Activated CD8-positive, alpha-beta T cell treated with anti-CD3 and anti-CD28 coated beads for 36 hours (primary cell): ENCODE measurements at regions of chr17 and their contacts with region 1.

Region 1: DNA sequence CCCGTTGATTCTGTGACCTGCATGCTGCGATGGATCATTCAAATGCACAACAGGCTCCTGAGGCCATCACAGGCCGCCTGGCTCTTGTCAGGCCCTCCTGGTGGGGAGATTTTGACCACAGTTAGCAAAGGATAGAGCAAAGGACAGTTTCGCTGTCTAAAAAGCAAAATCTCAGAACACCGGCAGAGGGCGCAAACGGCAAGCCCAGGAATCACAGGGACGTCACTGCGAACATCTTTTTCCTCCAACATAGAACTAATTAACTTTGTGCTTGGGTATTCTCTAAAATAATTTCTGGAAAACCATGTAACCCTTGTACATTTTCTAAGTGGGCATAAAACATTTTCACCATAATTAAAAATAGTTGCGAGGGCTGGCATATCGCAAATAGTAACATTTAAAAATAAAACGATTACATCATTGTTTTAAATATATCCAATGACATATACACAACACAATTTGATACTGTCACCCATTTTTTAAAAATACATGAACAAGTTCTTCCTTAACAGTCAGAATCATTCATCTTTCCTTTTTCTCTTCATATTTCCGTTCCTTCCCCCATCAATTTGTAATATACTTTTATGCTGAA is 19.7 kb upstream of the SLC47A1 start:
- DNase-seq: peak; percentile 77
- ATAC-seq: peak; percentile 71
- H3K4me3 Mint-ChIP-seq: no peak overlapping the region
- H3K27ac Mint-ChIP-seq: no peak overlapping the region
- H3K4me1 Mint-ChIP-seq: no peaks in the 10 kb centered on the region
- H3K27me3 Mint-ChIP-seq: peaks cover 3% of the 10 kb centered on the region
- CTCF ChIP-seq: peak; percentile 93

Region 2: DNA sequence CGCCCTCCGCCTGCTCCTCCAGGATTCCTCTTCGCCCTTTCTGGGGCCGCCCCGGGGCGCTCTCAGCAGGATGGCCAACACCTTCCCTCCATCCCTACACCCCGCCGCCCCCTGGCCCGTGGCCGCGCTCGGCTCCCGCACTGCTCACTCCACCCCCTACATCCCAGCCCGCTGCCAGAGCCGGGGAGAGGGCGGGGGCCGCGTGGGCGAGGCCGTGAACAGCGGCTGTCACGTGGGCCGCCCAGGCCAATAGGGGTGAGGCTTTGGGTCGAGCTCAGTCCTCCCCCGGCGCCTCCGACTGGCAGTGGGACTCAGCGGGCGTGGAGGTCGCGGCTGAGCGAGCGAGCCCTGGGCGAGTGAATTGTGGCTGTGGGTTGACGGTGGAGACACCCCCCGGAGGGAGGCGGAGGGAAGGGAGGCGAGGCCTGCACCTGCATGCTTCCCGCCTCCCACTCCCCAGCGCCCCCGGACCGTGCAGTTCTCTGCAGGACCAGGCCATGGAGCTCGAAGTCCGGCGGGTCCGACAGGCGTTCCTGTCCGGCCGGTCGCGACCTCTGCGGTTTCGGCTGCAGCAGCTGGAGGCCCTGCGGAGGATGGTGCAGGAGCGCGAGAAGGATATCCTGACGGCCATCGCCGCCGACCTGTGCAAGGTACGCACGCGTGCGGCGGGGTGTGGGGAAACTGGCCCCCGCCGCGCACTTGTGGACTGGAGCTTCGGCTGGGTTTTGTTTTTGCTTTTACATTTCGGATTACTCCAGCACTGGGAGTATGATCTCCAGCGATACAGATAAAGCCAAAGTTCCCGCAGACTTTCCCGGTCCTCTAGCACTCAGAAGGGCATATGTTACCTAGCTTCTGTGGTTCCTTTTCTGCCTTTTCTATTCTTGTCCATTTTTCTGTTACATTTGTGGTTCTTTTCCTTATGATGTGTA is 134.7 kb after region 1 on chr17 and contains the start of gene ALDH3A2:
- CTCF ChIA-PET with region 1: interaction called, 16 read pairs
- POLR2A ChIA-PET with region 1: no interaction called
- intact Hi-C with region 1: loop called (anchors 5 kb)
- DNase-seq: peak; percentile 98
- ATAC-seq: peak; percentile 94
- H3K4me3 Mint-ChIP-seq: peak within 1 kb of the TSS; percentile 88
- H3K27ac Mint-ChIP-seq: peak within 1 kb of the TSS; percentile 89
- H3K4me1 Mint-ChIP-seq: peaks cover 40% of the 10 kb centered on the region
- H3K27me3 Mint-ChIP-seq: no peaks in the 10 kb centered on the region
- CTCF ChIP-seq: no peak
- total RNA-seq, gene ALDH3A2: 17.6 to 20.3 TPM